Psoas muscle (tissue), 8 donors: ENCODE measurements at regions of chr17 and their contacts with region 1.

Region 1: DNA sequence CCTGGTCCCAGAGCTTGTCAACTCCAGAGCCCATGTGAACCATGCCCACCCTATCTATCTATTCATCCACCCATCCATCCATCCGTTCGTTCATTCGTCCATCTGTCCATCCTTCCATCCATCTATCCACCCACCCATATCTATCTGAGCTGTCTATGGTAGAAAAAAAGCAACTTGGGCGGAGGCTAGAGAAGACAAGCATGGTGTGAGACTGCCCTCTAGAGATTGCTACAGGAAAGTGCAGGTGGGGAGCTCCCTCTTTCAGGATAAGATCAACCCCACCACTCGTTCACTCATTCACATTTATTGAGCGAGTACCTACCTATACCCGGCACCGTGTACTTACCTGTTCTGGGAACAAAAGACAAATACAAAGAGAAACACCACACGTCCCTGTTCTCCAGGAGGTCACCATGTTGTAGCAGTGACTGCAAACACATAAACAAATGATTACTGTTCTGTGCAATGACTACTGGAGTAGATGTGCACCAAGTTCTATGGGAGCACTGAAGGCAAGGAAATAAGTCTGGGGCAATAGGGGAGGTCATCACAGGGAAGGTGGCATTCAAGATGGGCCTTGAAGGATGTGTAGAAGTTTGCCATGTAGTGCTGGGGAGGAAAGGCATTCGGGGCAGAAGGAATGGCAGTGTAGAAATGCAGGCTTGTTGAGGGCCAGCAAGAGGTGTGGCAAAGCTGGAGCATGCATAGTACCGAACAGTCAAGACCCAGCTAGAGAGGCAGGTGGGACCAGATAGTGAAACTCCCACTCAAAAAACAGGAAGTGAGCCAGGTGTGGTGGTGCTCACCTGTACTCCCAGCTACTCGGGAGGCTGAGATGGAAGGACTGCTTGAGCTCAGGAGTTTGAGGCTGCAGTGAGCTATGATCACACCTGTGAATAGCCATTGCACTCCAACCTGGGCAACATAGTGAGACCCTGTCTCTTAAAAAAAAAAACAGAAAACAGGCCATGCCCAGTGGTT is 13.4 kb upstream of the ATP5MC1 start:
- DNase-seq: no peak
- ATAC-seq: peak; percentile 80 to 91 (median 87)
- H3K4me3 ChIP-seq: no peak overlapping the region
- H3K27ac ChIP-seq: no peak overlapping the region
- H3K4me1 ChIP-seq: no peaks in the 10 kb centered on the region
- H3K27me3 ChIP-seq: no peaks in the 10 kb centered on the region
- CTCF ChIP-seq: peak; percentile 92

Region 2: DNA sequence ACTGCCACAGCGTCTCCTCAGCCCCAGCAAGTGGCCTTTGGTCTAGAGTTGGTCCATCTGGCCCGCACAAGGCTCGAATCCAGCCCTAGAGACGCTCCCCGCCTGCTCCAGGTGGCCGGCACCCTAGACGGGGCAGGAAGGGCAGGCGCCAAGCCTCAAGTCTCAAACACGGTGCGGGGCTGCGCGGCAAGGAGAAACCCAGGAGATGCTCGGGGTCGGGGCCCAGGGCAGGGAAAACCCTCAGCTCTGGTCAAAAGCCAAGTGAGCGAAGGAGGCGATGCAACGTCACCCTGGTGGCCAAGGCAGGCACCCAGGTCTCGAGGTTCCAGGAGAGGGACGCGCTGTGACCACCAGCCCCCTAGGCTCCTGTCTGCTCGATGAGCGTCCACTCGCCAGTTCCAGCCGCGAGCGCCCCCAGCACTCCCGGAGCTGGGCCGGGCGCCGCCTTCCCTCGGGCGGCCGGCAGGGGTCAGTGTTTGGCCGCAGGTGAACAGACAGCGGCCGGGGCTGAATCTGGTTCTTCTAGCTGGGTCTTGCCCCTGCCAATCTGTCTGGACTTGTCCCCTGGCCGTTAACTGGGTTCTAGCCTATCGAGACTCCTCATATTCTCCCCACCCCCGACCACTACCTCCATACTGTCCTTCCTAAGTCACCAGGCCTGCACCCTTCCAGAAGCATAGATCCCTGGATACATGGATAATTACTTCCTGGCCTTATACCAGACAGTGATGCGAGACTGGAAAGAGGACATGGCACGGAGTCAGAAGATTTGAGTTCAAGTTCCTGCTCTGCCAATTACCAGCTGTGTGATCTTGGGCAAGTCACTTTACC is 200.9 kb before region 1 on chr17:
- intact Hi-C with region 1: loop called (anchors 1 to 5 kb)
- DNase-seq: peak; percentile 58 to 76
- ATAC-seq: peak; percentile 79 to 93 (median 83)
- H3K4me3 ChIP-seq: no peak overlapping the region
- H3K27ac ChIP-seq: no peak overlapping the region
- H3K4me1 ChIP-seq: no peaks in the 10 kb centered on the region
- H3K27me3 ChIP-seq: peaks cover 0 to 44% (median 5%) of the 10 kb centered on the region in 3 donors
- CTCF ChIP-seq: peak; percentile 88

Region 3: GRCh38 chr17:48804925-48805411 is 74.2 kb before region 1 on chr17:
- intact Hi-C with region 1: loop called in 1 of 2 experiments (anchors 2 kb)
- DNase-seq: peak; percentile 55 to 75
- ATAC-seq: peak; percentile 67 to 87 (median 82)
- H3K4me3 ChIP-seq: no peak overlapping the region
- H3K27ac ChIP-seq: no peak overlapping the region
- H3K4me1 ChIP-seq: no peaks in the 10 kb centered on the region
- H3K27me3 ChIP-seq: no peaks in the 10 kb centered on the region
- CTCF ChIP-seq: peak; percentile 88

Region 4: GRCh38 chr17:48816774-48817590 is 62.2 kb before region 1 on chr17 and contains the start of gene TTLL6:
- intact Hi-C with region 1: loop called in 1 of 2 experiments (anchors 2 kb)
- DNase-seq: peak; percentile 74 to 82
- ATAC-seq: peak; percentile 71 to 93 (median 88)
- H3K4me3 ChIP-seq: peak within 1 kb of the TSS; percentile 59
- H3K27ac ChIP-seq: no peak within 1 kb of the TSS
- H3K4me1 ChIP-seq: no peaks in the 10 kb centered on the region
- H3K27me3 ChIP-seq: peaks cover 0 to 71% (median 6%) of the 10 kb centered on the region in 3 donors
- CTCF ChIP-seq: no peak
- total RNA-seq, gene TTLL6: not detected

Region 5: GRCh38 chr17:48915459-48916282 is 36.5 kb after region 1 on chr17:
- intact Hi-C with region 1: no loop called
- DNase-seq: peak in 1 of 2 donors; percentile 18
- ATAC-seq: peak; percentile 71 to 82 (median 78)
- H3K4me3 ChIP-seq: no peak overlapping the region
- H3K27ac ChIP-seq: peak overlapping the region; percentile 46
- H3K4me1 ChIP-seq: peaks cover 6% of the 10 kb centered on the region
- H3K27me3 ChIP-seq: no peaks in the 10 kb centered on the region
- CTCF ChIP-seq: no peak

Region 6: DNA sequence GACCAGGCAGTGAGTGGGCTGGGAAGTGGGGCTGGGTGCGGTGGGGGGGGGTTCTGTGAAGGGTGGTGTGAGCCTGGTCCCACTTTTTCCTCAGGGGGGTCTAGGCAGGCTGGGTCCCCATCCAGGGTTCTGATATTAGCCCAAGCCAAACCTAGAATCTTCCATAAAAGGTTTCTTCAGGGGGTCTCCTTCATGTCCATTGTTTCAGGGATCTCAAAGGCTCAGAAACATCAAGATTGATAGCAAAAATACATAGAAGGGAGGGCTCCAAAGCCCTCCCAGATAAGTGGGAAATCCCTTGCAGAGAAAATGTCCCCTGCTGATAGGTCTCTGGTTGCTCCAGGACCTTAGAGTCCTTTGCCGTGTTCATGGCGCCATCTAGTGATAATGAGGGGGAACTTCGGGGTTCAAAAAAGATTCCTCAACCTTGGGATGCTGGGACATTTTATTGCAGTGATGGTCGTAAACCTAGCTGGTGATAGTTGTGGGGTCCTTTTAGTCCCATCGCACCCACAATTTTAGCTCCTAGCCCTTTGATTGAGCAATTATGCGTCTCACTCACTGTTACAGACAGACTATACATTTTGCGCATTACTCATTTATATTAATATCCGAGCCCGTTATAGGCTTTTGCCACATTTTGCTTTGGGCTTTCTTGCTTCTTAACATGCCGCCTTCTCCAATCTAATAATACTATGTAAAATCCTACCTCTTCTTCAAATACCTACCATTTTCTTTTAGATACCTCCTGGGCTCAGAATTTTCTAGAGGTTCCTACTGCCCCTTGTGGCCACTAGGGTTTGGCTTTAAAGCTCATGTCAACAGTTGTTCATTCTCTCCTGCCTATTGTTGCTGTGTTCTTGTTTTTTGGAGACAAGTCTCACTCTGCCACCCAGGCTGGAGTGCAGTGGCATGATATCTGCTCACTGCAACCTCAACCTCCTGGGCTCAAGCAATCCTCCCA is 153.0 kb after region 1 on chr17:
- intact Hi-C with region 1: loop called in 1 of 2 experiments (anchors 2 kb)
- DNase-seq: no peak
- ATAC-seq: peak; percentile 58 to 74 (median 65)
- H3K4me3 ChIP-seq: no peak overlapping the region
- H3K27ac ChIP-seq: no peak overlapping the region
- H3K4me1 ChIP-seq: peaks cover 5% of the 10 kb centered on the region
- H3K27me3 ChIP-seq: peaks cover 0 to 36% (median 4%) of the 10 kb centered on the region in 3 donors
- CTCF ChIP-seq: peak; percentile 70